ENCODE measurements at regions of chr7 and their contacts with region 1.

Region 1: DNA sequence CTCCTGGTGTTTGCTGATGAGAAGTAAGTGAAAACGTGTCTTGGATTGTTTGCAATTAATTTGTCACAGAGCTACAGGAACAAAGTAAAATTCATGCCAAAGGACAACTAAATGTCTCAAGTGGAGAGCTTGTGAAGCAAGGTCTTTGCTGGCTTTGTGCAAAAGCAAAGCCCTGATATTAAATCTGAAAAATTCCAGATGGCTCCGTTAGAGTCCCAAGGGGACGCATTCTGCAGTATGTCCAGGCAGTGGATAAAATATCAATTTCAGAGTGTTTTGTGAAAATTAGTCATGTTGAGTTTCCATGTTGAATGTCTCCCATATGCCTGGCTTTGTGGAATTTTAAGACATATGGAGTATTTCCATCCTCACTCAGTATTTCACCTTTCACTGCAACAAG is 102.5 kb upstream of the PTN start:
- DNase-seq: no peak
- H3K4me3 ChIP-seq: no peak overlapping the region
- H3K27ac ChIP-seq: no peak overlapping the region
- H3K4me1 ChIP-seq: no peaks in the 10 kb centered on the region
- H3K27me3 ChIP-seq: no peaks in the 10 kb centered on the region
- CTCF ChIP-seq: no peak
- EP300 ChIP-seq: no peak
- POLR2A ChIP-seq: no peak
- RAD21 ChIP-seq: no peak

Region 2: GRCh38 chr7:137343281-137343841 is 102.7 kb before region 1 on chr7 and contains the start of gene PTN:
- CTCF ChIA-PET with region 1: interaction called, 11 read pairs
- POLR2A ChIA-PET with region 1: no interaction called
- DNase-seq: peak; percentile 31 to 73
- H3K4me3 ChIP-seq: peak within 1 kb of the TSS; percentile 69 to 79 (median 72)
- H3K27ac ChIP-seq: peak within 1 kb of the TSS; percentile 46; the same call in 1 of the 2 replicates
- H3K4me1 ChIP-seq: peaks cover 0 to 8% (median 5%) of the 10 kb centered on the region in 4 experiments; a peak in 5 of 7 replicates
- H3K27me3 ChIP-seq: no peaks in the 10 kb centered on the region; a peak in 1 of 7 replicates
- CTCF ChIP-seq: no peak
- EP300 ChIP-seq: no peak
- POLR2A ChIP-seq: peak in 1 of 2 experiments; percentile 79; a peak in 2 of 3 replicates
- RAD21 ChIP-seq: peak; percentile 1 to 8; a peak in 1 of 4 replicates
- total RNA-seq, gene PTN: 27.8 and 28.6 TPM in 2 replicates

Measured in H1 (cell line).